GM12878 (cell line): ENCODE measurements at regions of chr9 and their contacts with region 1.

Region 1: DNA sequence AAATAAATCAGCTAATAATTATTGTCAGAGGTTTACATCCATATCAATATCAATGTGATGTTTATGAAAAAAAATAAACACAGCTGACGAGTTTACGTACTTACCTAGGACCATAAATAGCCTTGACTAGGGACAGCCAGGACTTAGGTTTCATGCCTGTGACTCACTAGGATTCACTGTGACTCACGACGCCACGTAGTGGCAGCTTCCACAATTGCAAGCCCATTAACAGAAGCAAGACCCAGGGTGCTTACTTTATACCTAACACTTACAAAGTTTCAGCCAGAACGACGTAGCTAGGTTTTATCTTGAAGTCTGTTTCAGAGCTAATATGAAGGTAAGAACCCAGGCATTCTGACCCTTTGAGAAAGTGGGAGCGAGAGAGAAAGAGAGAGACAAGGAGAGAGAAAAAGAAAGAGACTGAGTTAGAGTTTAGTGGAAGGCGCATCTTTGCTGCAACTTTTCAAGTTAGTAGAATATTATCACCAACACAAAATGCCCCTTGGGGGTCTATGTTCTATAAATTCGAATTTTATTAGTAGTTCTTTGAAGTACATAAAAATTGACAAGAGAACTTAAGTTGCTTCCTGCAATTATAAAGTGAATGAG is 191.2 kb downstream of the GNA14 start:
- DNase-seq: no peak
- ATAC-seq: peak; percentile 91
- H3K4me3 ChIP-seq: no peak overlapping the region
- H3K27ac ChIP-seq: no peak overlapping the region
- H3K4me1 ChIP-seq: no peaks in the 10 kb centered on the region
- H3K27me3 ChIP-seq: no peaks in the 10 kb centered on the region; a peak in 2 of 4 replicates
- CTCF ChIP-seq: peak; percentile 79 to 94 (median 90)
- EP300 ChIP-seq: no peak
- POLR2A ChIP-seq: no peak
- RAD21 ChIP-seq: peak; percentile 47

Region 2: GRCh38 chr9:76704593-76705204 is 752.2 kb before region 1 on chr9:
- CTCF ChIA-PET with region 1: no interaction called
- POLR2A ChIA-PET with region 1: no interaction called
- RAD21 ChIA-PET with region 1: no interaction called
- SMC1A ChIA-PET with region 1: no interaction called
- in situ Hi-C with region 1: no loop called
- intact Hi-C with region 1: no loop called
- DNase-seq: peak; percentile 20
- ATAC-seq: peak; percentile 52; the same call in 2 of the 3 replicates
- H3K4me3 ChIP-seq: no peak overlapping the region
- H3K27ac ChIP-seq: no peak overlapping the region
- H3K4me1 ChIP-seq: no peaks in the 10 kb centered on the region
- H3K27me3 ChIP-seq: peaks cover 4 to 5% of the 10 kb centered on the region in 2 experiments; a peak in 2 of 4 replicates
- CTCF ChIP-seq: peak; percentile 45 to 66 (median 56); a peak in 5 of 6 replicates
- EP300 ChIP-seq: no peak
- POLR2A ChIP-seq: no peak
- RAD21 ChIP-seq: peak; percentile 86

Region 3: GRCh38 chr9:77149879-77150278 is 307.1 kb before region 1 on chr9:
- CTCF ChIA-PET with region 1: no interaction called
- POLR2A ChIA-PET with region 1: no interaction called
- RAD21 ChIA-PET with region 1: no interaction called
- SMC1A ChIA-PET with region 1: no interaction called
- in situ Hi-C with region 1: no loop called
- intact Hi-C with region 1: no loop called
- DNase-seq: no peak
- ATAC-seq: no peak
- H3K4me3 ChIP-seq: no peak overlapping the region
- H3K27ac ChIP-seq: no peak overlapping the region
- H3K4me1 ChIP-seq: no peaks in the 10 kb centered on the region
- H3K27me3 ChIP-seq: no peaks in the 10 kb centered on the region; a peak in 1 of 4 replicates
- CTCF ChIP-seq: no peak
- EP300 ChIP-seq: no peak
- POLR2A ChIP-seq: no peak
- RAD21 ChIP-seq: no peak

Region 4: DNA sequence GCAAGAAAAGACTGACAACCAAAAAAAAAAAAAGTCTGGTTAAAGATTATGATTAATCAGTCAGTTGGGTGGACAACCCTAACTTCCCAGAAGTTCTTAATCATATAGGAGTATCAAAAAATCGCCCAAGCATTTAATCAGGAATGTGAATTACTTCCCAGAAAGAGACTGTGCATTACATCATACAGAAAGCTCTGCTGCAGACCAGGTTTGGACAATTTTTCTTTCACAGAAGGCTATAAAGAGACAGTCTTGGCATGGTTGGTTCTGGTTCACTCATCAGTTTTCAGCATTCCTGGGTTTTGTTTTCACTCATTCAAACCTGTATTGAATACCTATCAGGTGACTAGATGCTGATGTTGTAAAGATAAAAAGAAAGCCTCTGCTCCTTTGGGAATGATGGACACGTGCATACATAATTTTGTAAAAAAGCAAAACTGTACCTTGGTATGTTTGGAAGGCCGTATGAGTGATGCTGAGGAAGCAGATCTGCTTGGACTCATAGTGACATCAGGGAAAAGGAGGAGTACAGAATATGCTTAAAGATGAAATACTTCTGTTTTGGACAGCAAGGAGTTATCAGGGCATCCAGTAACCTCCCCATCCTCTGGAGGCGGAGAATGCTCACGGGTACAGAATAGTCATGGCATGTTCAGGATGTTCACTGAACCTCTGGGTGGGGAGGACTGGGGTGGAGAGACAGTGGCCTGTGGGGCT is 12.7 kb after region 1 on chr9:
- CTCF ChIA-PET with region 1: interaction called, 43 read pairs
- POLR2A ChIA-PET with region 1: no interaction called
- RAD21 ChIA-PET with region 1: no interaction called
- SMC1A ChIA-PET with region 1: interaction called, 12 read pairs
- in situ Hi-C with region 1: no loop called
- intact Hi-C with region 1: no loop called
- DNase-seq: no peak
- ATAC-seq: no peak
- H3K4me3 ChIP-seq: no peak overlapping the region
- H3K27ac ChIP-seq: no peak overlapping the region
- H3K4me1 ChIP-seq: no peaks in the 10 kb centered on the region
- H3K27me3 ChIP-seq: no peaks in the 10 kb centered on the region; a peak in 1 of 4 replicates
- CTCF ChIP-seq: no peak
- EP300 ChIP-seq: no peak
- POLR2A ChIP-seq: no peak
- RAD21 ChIP-seq: no peak

Region 5: DNA sequence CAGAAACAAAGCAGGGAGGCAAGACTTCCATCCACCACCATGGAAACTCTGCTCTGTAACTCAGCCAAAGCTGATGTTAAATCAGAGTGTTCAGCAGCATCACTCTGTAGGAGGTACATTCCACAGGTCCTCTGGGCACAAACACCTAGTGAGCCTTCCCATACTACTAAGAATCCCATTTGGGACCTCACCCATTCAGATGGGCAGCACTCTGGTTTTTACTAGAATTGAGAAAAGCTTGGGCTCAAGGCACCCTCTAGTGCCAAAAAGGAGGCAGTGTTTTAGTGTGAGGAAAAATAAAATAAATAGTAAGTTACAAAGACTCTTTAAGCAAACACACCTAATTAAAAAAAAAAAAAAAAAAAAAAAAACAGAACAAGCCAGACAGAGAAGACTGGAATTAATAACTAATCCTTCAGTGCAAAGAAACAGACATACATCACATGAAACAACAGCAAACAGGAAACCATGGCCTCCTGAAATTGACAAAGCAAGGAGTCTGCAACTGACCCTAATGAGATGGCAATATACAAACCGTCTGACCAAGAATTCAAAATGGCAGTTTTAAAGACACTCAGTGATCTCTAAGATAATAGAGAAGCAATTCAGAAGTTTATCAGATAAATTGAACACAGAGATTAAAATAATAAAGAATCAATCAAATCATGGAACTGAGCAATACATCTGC is 31.6 kb after region 1 on chr9:
- CTCF ChIA-PET with region 1: interaction called, 49 read pairs
- POLR2A ChIA-PET with region 1: no interaction called
- RAD21 ChIA-PET with region 1: interaction called, 5 read pairs
- SMC1A ChIA-PET with region 1: interaction called, 14 read pairs
- in situ Hi-C with region 1: no loop called
- intact Hi-C with region 1: loop called (anchors 2 kb)
- DNase-seq: no peak
- ATAC-seq: peak; percentile 72
- H3K4me3 ChIP-seq: no peak overlapping the region
- H3K27ac ChIP-seq: no peak overlapping the region
- H3K4me1 ChIP-seq: no peaks in the 10 kb centered on the region
- H3K27me3 ChIP-seq: no peaks in the 10 kb centered on the region
- CTCF ChIP-seq: peak; percentile 13 to 44 (median 31); a peak in 4 of 6 replicates
- EP300 ChIP-seq: no peak
- POLR2A ChIP-seq: no peak
- RAD21 ChIP-seq: peak; percentile 70

Region 6: DNA sequence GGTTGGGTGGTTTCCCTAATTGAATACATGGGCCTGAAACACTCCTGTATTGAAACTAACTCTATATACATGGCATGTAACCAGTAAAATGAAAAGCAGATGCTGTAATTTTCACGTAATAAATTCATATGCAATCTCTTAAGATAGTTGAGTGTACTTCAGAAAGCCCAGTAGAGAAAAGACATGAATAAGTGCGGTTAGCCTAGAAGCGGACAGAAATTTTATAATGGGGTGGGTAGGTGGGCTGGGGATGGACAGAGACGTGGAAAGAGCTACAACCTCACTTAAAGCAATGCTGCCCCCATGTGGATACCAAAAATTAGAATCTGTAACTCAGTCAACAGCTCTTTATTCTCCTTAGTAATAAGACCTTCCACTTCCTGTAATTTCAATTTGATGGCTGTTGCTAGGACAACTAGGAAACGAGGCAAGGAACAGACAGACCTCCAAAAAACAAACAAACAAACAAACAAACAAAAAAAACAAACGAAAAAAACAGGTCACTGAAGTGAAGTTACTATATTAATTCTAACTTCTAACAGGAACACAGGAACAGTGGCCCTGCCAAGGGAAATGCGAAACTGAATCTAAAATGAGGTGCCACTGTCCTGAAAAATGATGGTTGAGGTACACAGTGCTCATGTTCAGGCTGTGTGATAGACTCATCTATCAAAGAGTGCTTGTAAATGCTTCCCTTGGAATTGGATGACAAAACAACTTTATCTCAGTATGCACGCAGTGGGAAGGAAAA is 294.6 kb after region 1 on chr9:
- CTCF ChIA-PET with region 1: interaction called, 79 read pairs
- POLR2A ChIA-PET with region 1: no interaction called
- RAD21 ChIA-PET with region 1: interaction called, 15 read pairs
- SMC1A ChIA-PET with region 1: interaction called, 6 read pairs
- in situ Hi-C with region 1: no loop called
- intact Hi-C with region 1: loop called (anchors 1 kb)
- DNase-seq: no peak
- ATAC-seq: peak; percentile 76
- H3K4me3 ChIP-seq: no peak overlapping the region
- H3K27ac ChIP-seq: no peak overlapping the region
- H3K4me1 ChIP-seq: no peaks in the 10 kb centered on the region
- H3K27me3 ChIP-seq: no peaks in the 10 kb centered on the region
- CTCF ChIP-seq: peak; percentile 34 to 53 (median 34); a peak in 4 of 6 replicates
- EP300 ChIP-seq: no peak
- POLR2A ChIP-seq: no peak
- RAD21 ChIP-seq: peak; percentile 51